Caco-2 (cell line): ENCODE measurements at regions of chr3 and their contacts with region 1.

Region 1: DNA sequence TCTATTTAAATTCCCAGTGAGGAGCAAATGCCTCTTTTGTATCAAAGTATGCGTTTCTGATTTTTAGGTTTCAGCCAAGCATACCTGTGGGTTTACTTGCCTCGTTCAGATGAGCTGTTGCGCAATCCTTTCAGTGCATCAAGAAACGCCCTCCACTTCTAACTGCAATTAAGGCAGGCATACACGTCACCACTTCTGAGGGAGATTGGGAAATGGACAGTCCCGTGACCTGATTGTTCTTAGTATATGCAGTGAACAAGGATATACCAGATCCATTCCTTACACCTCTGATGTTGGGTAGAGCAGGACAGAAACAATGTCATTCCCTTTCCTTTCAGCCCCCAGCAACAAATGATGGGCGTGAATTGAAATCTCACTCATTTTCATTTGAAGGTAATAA is 219.0 kb downstream of the ITPR1 start:
- DNase-seq: no peak
- H3K4me3 ChIP-seq: no peak overlapping the region
- H3K4me3 Mint-ChIP-seq: no peak overlapping the region
- H3K27ac Mint-ChIP-seq: no peak overlapping the region
- H3K4me1 ChIP-seq: no peaks in the 10 kb centered on the region; the same call in 1 of the 2 replicates
- H3K4me1 Mint-ChIP-seq: peaks cover 5% of the 10 kb centered on the region
- H3K27me3 ChIP-seq: no peaks in the 10 kb centered on the region
- H3K27me3 Mint-ChIP-seq: no peaks in the 10 kb centered on the region
- CTCF ChIP-seq: no peak

Region 2: GRCh38 chr3:4447295-4447999 is 264.7 kb before region 1 on chr3:
- CTCF ChIA-PET with region 1: no interaction called
- POLR2A ChIA-PET with region 1: no interaction called
- intact Hi-C with region 1: loop called (anchors 5 kb)
- DNase-seq: no peak
- H3K4me3 ChIP-seq: no peak overlapping the region
- H3K4me3 Mint-ChIP-seq: no peak overlapping the region
- H3K27ac Mint-ChIP-seq: no peak overlapping the region
- H3K4me1 ChIP-seq: no peaks in the 10 kb centered on the region
- H3K4me1 Mint-ChIP-seq: no peaks in the 10 kb centered on the region
- H3K27me3 ChIP-seq: no peaks in the 10 kb centered on the region
- H3K27me3 Mint-ChIP-seq: no peaks in the 10 kb centered on the region
- CTCF ChIP-seq: no peak

Region 3: GRCh38 chr3:4665197-4665596 is 46.9 kb before region 1 on chr3:
- CTCF ChIA-PET with region 1: no interaction called
- POLR2A ChIA-PET with region 1: no interaction called
- intact Hi-C with region 1: no loop called
- DNase-seq: no peak
- H3K4me3 ChIP-seq: no peak overlapping the region
- H3K4me3 Mint-ChIP-seq: no peak overlapping the region
- H3K27ac Mint-ChIP-seq: no peak overlapping the region
- H3K4me1 ChIP-seq: no peaks in the 10 kb centered on the region
- H3K4me1 Mint-ChIP-seq: no peaks in the 10 kb centered on the region
- H3K27me3 ChIP-seq: no peaks in the 10 kb centered on the region
- H3K27me3 Mint-ChIP-seq: no peaks in the 10 kb centered on the region
- CTCF ChIP-seq: no peak

Region 4: DNA sequence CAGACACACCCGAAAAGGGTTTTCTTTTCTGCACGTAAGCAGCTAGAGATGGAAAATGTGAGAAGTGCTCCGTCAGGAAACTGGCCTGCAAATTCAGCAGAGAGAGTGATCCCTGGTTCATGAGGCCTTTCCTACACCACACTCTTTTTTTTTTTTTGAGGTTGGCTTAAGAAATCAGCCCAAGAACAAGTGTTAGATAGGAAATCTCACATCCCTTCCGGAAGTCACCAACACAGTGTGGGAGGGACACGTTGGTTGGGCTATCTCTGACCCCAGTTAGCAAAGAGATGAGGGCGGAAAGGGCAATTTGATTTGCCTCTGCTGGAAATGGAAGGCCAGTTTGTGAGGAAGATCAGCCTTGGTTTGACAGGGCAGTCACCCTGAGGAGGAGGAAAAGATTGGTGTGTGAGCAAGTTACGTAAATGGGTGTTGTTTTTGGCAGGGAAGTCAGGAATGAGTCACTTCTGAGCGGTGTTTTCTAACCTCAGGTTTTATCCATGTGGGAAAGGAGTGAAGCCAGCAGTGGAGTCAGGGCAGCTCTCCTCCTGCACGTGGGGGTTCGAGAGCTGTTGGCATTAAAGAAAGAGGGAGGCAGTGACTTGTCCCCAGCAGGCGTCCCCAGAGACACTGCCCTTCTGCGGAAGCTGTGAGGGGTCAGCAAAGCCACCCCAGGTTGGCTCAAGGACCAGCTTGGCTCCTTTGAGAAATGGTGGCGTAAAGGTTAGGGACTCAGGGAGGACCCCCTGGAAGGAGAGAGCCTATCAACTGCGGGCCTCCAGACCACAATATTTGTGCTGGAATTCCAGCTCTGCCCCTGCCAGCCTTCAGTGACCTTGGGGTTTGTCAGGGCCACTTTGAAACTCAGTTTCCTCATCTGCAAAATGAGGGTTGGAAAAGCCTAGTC is 29.5 kb after region 1 on chr3:
- CTCF ChIA-PET with region 1: interaction called, 3 read pairs
- POLR2A ChIA-PET with region 1: no interaction called
- intact Hi-C with region 1: loop called (anchors 1 kb)
- DNase-seq: no peak
- H3K4me3 ChIP-seq: no peak overlapping the region
- H3K4me3 Mint-ChIP-seq: no peak overlapping the region
- H3K27ac Mint-ChIP-seq: no peak overlapping the region
- H3K4me1 ChIP-seq: peaks cover 36% of the 10 kb centered on the region
- H3K4me1 Mint-ChIP-seq: peaks cover 28% of the 10 kb centered on the region
- H3K27me3 ChIP-seq: no peaks in the 10 kb centered on the region
- H3K27me3 Mint-ChIP-seq: no peaks in the 10 kb centered on the region
- CTCF ChIP-seq: no peak

Region 5: DNA sequence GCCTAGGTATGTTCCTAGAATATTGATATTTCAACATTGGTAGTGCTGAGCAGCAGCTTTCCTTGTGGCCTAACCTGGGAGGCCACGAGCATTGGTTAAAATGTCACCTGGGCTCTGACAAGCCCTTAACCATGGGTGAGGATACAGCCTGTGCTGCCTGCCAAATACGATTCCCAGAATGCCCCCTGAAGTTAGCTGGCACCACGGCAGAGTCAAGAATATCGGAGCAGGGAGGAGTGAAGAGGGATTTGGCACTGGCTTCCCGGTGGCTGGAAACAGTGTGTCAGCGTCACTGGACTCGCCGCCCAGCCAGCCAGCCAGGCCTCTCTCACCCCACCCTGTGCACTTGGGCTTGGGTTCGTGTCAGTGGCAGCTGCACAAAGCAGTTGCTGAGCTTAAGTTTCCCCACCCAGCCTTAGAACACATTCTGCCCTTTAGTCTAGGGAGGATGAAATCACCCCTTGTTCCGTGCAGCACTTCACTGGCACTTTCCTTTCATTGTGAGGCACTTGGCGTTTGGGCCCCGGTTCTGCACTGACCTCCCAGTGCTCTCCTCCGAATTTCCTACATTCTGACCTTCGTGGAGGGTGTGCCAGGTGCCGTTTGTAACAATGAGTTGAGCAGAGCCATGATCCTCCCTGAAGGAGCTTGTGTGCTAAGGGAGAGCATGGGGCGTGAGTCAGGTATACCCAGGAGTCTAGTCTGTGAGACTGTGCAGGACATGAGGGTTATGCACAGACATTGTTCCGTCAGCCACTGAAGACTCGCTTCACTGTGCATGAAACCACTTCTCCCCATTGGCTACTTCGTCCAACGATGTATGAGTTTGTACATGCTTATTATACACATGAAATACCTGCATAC is 114.3 kb after region 1 on chr3:
- CTCF ChIA-PET with region 1: no interaction called
- POLR2A ChIA-PET with region 1: no interaction called
- intact Hi-C with region 1: loop called (anchors 5 kb)
- DNase-seq: no peak
- H3K4me3 ChIP-seq: no peak overlapping the region
- H3K4me3 Mint-ChIP-seq: no peak overlapping the region
- H3K27ac Mint-ChIP-seq: no peak overlapping the region
- H3K4me1 ChIP-seq: peaks cover 18% of the 10 kb centered on the region
- H3K4me1 Mint-ChIP-seq: peaks cover 13% of the 10 kb centered on the region
- H3K27me3 ChIP-seq: no peaks in the 10 kb centered on the region
- H3K27me3 Mint-ChIP-seq: no peaks in the 10 kb centered on the region
- CTCF ChIP-seq: no peak

Region 6: GRCh38 chr3:4963669-4964589 is 251.8 kb after region 1 on chr3:
- CTCF ChIA-PET with region 1: no interaction called
- POLR2A ChIA-PET with region 1: no interaction called
- intact Hi-C with region 1: no loop called
- DNase-seq: no peak
- H3K4me3 ChIP-seq: no peak overlapping the region
- H3K4me3 Mint-ChIP-seq: no peak overlapping the region
- H3K27ac Mint-ChIP-seq: no peak overlapping the region
- H3K4me1 ChIP-seq: no peaks in the 10 kb centered on the region
- H3K4me1 Mint-ChIP-seq: no peaks in the 10 kb centered on the region
- H3K27me3 ChIP-seq: no peaks in the 10 kb centered on the region
- H3K27me3 Mint-ChIP-seq: peaks cover 9% of the 10 kb centered on the region
- CTCF ChIP-seq: no peak

Region 7: GRCh38 chr3:4978204-4978965 is 266.2 kb after region 1 on chr3:
- CTCF ChIA-PET with region 1: interaction called, 17 read pairs
- POLR2A ChIA-PET with region 1: interaction called, 3 read pairs
- intact Hi-C with region 1: loop called (anchors 1 kb)
- DNase-seq: peak; percentile 91 to 93
- H3K4me3 ChIP-seq: peak overlapping the region; percentile 70
- H3K4me3 Mint-ChIP-seq: peak overlapping the region; percentile 89
- H3K27ac Mint-ChIP-seq: peak overlapping the region; percentile 67
- H3K4me1 ChIP-seq: peaks cover 18% of the 10 kb centered on the region
- H3K4me1 Mint-ChIP-seq: peaks cover 17% of the 10 kb centered on the region
- H3K27me3 ChIP-seq: no peaks in the 10 kb centered on the region
- H3K27me3 Mint-ChIP-seq: no peaks in the 10 kb centered on the region
- CTCF ChIP-seq: no peak

Region 8: DNA sequence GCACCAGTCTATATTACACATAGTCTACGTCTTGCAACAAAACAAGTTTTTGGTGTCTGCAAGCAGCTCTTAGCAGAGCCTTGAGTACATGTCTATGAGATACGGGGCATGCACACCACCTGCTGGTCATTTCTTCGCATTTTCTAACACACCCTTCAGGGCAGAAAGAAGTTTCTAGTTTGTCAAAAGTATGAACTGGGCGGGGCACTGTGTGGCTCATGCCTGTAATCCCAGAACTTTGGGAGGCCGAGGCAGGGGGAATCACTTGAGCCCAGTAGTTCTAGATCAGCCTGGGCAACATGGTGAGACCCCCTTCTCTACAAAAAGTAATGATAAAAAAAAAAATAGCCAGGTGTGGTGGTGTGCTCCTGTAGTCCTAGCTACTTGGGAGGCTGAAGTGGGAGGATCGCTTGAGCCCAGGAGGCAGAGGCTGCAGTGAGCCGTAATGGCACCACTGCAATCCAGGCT is 345.7 kb after region 1 on chr3:
- CTCF ChIA-PET with region 1: interaction called, 47 read pairs
- POLR2A ChIA-PET with region 1: no interaction called
- intact Hi-C with region 1: loop called (anchors 1 kb)
- DNase-seq: peak; percentile 75 to 76
- H3K4me3 ChIP-seq: no peak overlapping the region
- H3K4me3 Mint-ChIP-seq: no peak overlapping the region
- H3K27ac Mint-ChIP-seq: no peak overlapping the region
- H3K4me1 ChIP-seq: no peaks in the 10 kb centered on the region
- H3K4me1 Mint-ChIP-seq: no peaks in the 10 kb centered on the region
- H3K27me3 ChIP-seq: no peaks in the 10 kb centered on the region
- H3K27me3 Mint-ChIP-seq: no peaks in the 10 kb centered on the region
- CTCF ChIP-seq: peak; percentile 68 to 69